ENCODE measurements at regions of chr4 and their contacts with region 1.

Region 1: GRCh38 chr4:16264798-16265197 is 38.5 kb upstream of the TAPT1 start:
- DNase-seq: no peak
- ATAC-seq: no peak
- H3K4me3 ChIP-seq: no peak overlapping the region
- H3K27ac ChIP-seq: no peak overlapping the region
- H3K4me1 ChIP-seq: no peaks in the 10 kb centered on the region
- H3K27me3 ChIP-seq: no peaks in the 10 kb centered on the region
- CTCF ChIP-seq: peak; percentile 49; the same call in 1 of the 2 replicates

Region 2: DNA sequence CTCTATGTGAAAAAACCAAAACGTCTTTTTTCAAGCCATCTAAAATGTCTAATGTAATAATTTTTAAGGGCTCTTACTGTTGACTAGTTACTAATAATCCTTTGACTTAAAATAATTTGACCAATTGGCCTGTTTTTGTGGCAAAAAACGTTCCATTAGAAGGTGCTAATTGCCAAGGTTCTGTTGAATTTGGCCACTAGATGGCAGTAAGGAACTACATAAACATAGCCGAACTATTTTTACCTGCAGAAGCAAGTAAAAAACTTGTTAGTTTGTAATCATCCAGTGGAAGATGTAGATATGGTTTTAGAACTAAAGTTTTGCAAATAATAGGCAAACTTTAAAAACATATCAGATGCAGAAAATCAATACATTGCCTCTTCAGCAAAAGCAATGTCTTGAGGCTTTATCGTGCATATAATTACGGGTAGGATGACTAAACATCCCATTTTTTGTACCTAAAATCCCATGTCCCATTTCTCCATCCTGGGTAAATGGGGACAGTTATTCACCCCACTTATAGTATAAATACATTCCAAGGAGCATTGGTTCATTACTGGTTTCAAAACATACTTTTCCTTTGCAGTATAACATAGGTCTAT is 238.5 kb before region 1 on chr4:
- CTCF ChIA-PET with region 1: no interaction called
- POLR2A ChIA-PET with region 1: no interaction called
- in situ Hi-C with region 1: no loop called
- intact Hi-C with region 1: loop called (anchors 2 kb)
- DNase-seq: peak; percentile 27
- ATAC-seq: no peak
- H3K4me3 ChIP-seq: no peak overlapping the region
- H3K27ac ChIP-seq: no peak overlapping the region
- H3K4me1 ChIP-seq: no peaks in the 10 kb centered on the region
- H3K27me3 ChIP-seq: peaks cover 2% of the 10 kb centered on the region; the same call in 1 of the 2 replicates
- CTCF ChIP-seq: peak; percentile 59; the same call in 1 of the 2 replicates

Region 3: GRCh38 chr4:16450724-16451123 is 185.9 kb after region 1 on chr4:
- CTCF ChIA-PET with region 1: no interaction called
- POLR2A ChIA-PET with region 1: no interaction called
- in situ Hi-C with region 1: no loop called
- intact Hi-C with region 1: no loop called
- DNase-seq: no peak
- ATAC-seq: no peak
- H3K4me3 ChIP-seq: no peak overlapping the region
- H3K27ac ChIP-seq: no peak overlapping the region
- H3K4me1 ChIP-seq: no peaks in the 10 kb centered on the region
- H3K27me3 ChIP-seq: no peaks in the 10 kb centered on the region
- CTCF ChIP-seq: no peak

Region 4: GRCh38 chr4:16733509-16733908 is 468.7 kb after region 1 on chr4:
- CTCF ChIA-PET with region 1: no interaction called
- POLR2A ChIA-PET with region 1: no interaction called
- in situ Hi-C with region 1: no loop called
- intact Hi-C with region 1: no loop called
- DNase-seq: no peak
- ATAC-seq: no peak
- H3K4me3 ChIP-seq: no peak overlapping the region
- H3K27ac ChIP-seq: no peak overlapping the region
- H3K4me1 ChIP-seq: no peaks in the 10 kb centered on the region
- H3K27me3 ChIP-seq: no peaks in the 10 kb centered on the region
- CTCF ChIP-seq: no peak